Calu3 (cell line): ENCODE measurements at regions of chr1 and their contacts with region 1.

Region 1: DNA sequence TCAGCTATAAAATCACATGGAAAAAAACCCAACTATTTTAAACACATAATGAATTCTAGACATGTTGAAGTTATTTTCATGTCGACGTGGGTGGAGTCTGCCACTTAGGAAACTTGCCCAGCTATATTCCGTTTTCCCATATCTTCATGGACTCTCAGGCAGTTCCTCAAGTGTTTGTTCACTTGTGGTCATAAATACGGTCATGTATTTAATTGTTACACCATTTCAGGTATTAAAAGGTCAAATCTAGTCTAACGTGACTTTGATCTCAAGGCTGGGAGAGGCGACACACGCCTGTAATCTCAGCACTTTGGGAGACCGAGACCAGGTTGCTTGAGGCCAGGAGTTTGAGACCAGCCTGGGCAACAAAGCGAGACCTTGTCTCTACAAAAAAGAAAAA is 346.9 kb downstream of the PBX1 start:
- DNase-seq: no peak
- H3K4me3 Mint-ChIP-seq: no peak overlapping the region
- H3K27ac Mint-ChIP-seq: no peak overlapping the region
- H3K4me1 Mint-ChIP-seq: no peaks in the 10 kb centered on the region
- H3K27me3 Mint-ChIP-seq: no peaks in the 10 kb centered on the region
- CTCF ChIP-seq: no peak

Region 2: DNA sequence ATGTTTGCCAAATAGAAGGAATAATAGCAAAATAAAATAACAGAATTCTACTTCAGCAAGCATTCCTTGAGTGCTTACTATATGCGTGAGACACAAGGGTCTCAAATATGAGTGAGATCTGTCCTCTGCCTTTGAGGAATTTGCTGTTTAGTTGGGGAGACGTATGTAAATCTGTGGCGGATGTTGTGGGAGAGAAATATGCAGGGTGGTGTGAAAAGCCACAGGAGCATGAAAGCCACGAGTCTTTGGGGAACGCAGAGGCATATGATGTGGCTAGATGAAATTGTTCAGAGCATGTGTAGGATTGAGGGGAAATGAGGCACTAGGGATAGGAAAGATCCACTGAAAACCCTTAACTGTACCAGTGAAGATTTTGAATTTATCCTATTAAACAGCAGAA is 102.5 kb before region 1 on chr1:
- CTCF ChIA-PET with region 1: no interaction called
- intact Hi-C with region 1: loop called (anchors 10 kb)
- DNase-seq: no peak
- H3K4me3 Mint-ChIP-seq: no peak overlapping the region
- H3K27ac Mint-ChIP-seq: no peak overlapping the region
- H3K4me1 Mint-ChIP-seq: peaks cover 17% of the 10 kb centered on the region
- H3K27me3 Mint-ChIP-seq: no peaks in the 10 kb centered on the region
- CTCF ChIP-seq: no peak

Region 3: DNA sequence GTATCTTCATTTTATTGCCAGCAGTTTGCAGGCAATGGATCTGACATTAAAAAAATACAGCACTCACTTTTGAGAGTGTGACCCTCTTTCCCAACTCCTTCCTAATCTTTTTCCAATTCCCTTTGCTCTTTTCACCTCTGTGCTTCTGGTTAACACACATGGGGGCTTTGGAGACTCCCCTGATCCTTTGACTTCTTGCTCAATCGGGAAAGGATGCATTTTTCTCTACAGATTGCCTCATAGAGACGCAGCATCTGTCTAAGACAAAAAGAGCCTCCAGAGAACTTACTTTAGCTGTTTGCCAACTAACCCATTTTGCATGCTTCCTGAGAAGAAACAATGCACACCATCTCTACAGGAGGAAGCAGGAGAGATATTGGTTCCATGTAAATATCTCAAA is 31.4 kb after region 1 on chr1:
- CTCF ChIA-PET with region 1: no interaction called
- intact Hi-C with region 1: no loop called
- DNase-seq: no peak
- H3K4me3 Mint-ChIP-seq: no peak overlapping the region
- H3K27ac Mint-ChIP-seq: no peak overlapping the region
- H3K4me1 Mint-ChIP-seq: no peaks in the 10 kb centered on the region
- H3K27me3 Mint-ChIP-seq: no peaks in the 10 kb centered on the region
- CTCF ChIP-seq: no peak